H1 (cell line): ENCODE measurements at regions of chr7 and their contacts with region 1.

Region 1: DNA sequence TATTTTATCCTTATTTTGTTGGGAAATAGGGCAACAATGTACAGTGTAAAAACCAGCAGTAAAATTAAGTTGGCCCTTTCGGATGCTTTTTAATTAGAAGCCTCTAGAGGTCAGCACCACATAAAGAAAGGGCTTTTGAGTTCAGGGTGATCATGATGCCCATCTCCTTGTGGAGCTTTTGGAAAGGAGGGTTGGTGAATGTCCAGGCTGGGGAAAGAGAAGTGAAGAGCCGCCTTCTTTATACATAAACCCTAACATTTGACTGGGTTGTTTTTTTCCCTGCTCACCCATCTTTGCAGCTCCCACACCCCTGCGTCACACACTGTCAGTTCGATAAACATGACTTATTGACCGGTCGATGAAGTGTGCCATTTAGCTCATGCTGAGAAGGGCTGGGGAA is 29.8 kb downstream of the MTURN start:
- DNase-seq: no peak
- H3K4me3 ChIP-seq: no peak overlapping the region
- H3K27ac ChIP-seq: no peak overlapping the region
- H3K4me1 ChIP-seq: peaks cover 13 to 27% (median 26%) of the 10 kb centered on the region in 4 experiments
- H3K27me3 ChIP-seq: peaks cover 0 to 12% (median 6%) of the 10 kb centered on the region in 4 experiments; a peak in 5 of 7 replicates
- CTCF ChIP-seq: peak in 2 of 3 experiments; percentile 66 to 75; a peak in 3 of 4 replicates
- EP300 ChIP-seq: no peak
- POLR2A ChIP-seq: no peak
- RAD21 ChIP-seq: peak; percentile 86 to 89

Region 2: GRCh38 chr7:30117877-30118276 is 46.7 kb before region 1 on chr7:
- CTCF ChIA-PET with region 1: no interaction called
- POLR2A ChIA-PET with region 1: no interaction called
- DNase-seq: no peak
- H3K4me3 ChIP-seq: no peak overlapping the region
- H3K27ac ChIP-seq: no peak overlapping the region
- H3K4me1 ChIP-seq: no peaks in the 10 kb centered on the region; a peak in 1 of 7 replicates
- H3K27me3 ChIP-seq: no peaks in the 10 kb centered on the region
- CTCF ChIP-seq: no peak
- EP300 ChIP-seq: no peak
- POLR2A ChIP-seq: no peak
- RAD21 ChIP-seq: no peak

Region 3: DNA sequence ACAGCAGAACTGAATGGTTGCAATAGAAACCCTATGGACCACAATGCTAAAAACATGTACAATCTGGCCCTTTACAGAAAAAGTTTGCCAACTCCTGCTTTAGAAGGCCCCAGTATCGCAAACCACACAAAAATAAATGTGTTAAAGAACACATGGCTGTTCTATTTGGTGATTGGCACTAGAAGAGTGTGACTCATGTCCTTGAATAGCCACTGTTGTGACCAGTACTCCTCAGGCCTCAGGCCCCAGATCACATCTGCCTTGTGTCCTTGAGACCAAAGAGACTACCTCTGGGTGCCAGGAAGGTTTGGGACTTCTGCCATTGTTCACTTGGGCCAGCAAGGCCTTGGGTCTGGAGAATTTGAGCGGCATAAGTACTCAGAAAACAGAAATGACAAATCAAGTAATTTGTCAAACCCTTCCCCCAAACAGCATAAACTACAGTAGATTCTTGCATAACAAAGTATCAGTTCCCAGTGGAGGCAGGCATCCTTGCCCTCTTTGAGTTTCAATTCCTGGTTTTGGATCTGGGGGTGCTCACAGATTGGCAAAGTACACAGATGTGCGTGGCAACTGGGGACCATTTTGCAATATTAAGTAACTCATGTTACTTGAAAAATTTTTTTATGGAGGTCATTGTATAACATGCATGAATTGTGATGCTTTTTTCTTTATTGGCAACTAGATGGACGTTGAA is 20.4 kb after region 1 on chr7:
- CTCF ChIA-PET with region 1: interaction called, 22 read pairs
- POLR2A ChIA-PET with region 1: interaction called, 3 read pairs
- DNase-seq: no peak
- H3K4me3 ChIP-seq: no peak overlapping the region
- H3K27ac ChIP-seq: no peak overlapping the region
- H3K4me1 ChIP-seq: peaks cover 0 to 4% (median 0%) of the 10 kb centered on the region in 4 experiments; a peak in 2 of 7 replicates
- H3K27me3 ChIP-seq: no peaks in the 10 kb centered on the region
- CTCF ChIP-seq: no peak
- EP300 ChIP-seq: no peak
- POLR2A ChIP-seq: no peak
- RAD21 ChIP-seq: no peak

Region 4: GRCh38 chr7:30276203-30276900 is 111.8 kb after region 1 on chr7:
- CTCF ChIA-PET with region 1: interaction called, 10 read pairs
- POLR2A ChIA-PET with region 1: no interaction called
- DNase-seq: peak; percentile 15 to 63
- H3K4me3 ChIP-seq: no peak overlapping the region
- H3K27ac ChIP-seq: no peak overlapping the region
- H3K4me1 ChIP-seq: peaks cover 0 to 1% (median 0%) of the 10 kb centered on the region in 4 experiments; a peak in 1 of 7 replicates
- H3K27me3 ChIP-seq: no peaks in the 10 kb centered on the region
- CTCF ChIP-seq: peak; percentile 58 to 89 (median 87)
- EP300 ChIP-seq: no peak
- POLR2A ChIP-seq: no peak
- RAD21 ChIP-seq: peak; percentile 95 to 96

Region 5: DNA sequence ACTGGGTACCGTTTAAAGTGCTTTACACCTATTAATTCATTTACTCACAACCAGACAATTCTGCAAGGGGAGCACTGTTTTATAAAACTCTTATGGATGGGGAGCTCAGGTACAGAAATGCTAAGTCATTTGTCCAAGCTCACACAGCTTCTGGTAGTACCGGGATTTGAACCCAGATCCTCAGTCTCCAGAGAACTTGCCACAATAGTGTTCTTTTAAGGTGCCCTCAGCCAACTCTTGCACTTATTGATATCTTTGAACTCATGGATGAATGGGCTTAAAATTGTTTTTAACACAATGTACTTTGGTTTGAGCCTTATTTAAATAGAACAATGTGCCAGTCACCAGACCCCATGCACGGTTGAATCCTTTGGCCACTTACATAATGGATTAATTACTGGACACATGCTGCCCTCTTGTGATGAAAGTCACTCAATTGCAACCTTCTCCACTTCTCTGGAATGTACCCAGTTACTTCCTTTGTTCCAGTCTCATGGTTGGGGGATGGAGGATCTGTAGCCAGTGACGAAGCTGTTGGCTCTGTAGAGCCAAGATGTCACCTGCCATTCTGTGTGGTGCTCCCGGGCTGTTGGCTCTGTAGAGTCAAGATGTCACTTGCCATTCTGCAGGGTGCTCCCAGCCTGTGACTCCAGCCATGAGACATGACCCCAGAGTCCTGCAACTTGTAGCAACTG is 248.4 kb after region 1 on chr7:
- CTCF ChIA-PET with region 1: interaction called, 13 read pairs
- POLR2A ChIA-PET with region 1: no interaction called
- DNase-seq: peak in 1 of 2 experiments; percentile 48
- H3K4me3 ChIP-seq: no peak overlapping the region
- H3K27ac ChIP-seq: no peak overlapping the region
- H3K4me1 ChIP-seq: peaks cover 0 to 5% (median 3%) of the 10 kb centered on the region in 4 experiments; a peak in 3 of 7 replicates
- H3K27me3 ChIP-seq: no peaks in the 10 kb centered on the region
- CTCF ChIP-seq: peak in 2 of 3 experiments; percentile 57 to 82; a peak in 2 of 4 replicates
- EP300 ChIP-seq: peak in 1 of 2 experiments; percentile 56; a peak in 1 of 3 replicates
- POLR2A ChIP-seq: peak in 1 of 2 experiments; percentile 57; a peak in 1 of 3 replicates
- RAD21 ChIP-seq: peak; percentile 92